ENCODE measurements at regions of chr5 and their contacts with region 1.

Region 1: GRCh38 chr5:143066556-143067281 is 296.5 kb downstream of the ARHGAP26 start:
- DNase-seq: peak in 1 of 4 donors; percentile 45
- ATAC-seq: no peak
- H3K4me3 ChIP-seq: no peak overlapping the region
- H3K27ac ChIP-seq: peak overlapping the region in 1 of 2 donors; percentile 48
- H3K4me1 ChIP-seq: peaks cover 29 to 49% of the 10 kb centered on the region in 2 donors
- H3K27me3 ChIP-seq: no peaks in the 10 kb centered on the region
- CTCF ChIP-seq: no peak

Region 2: GRCh38 chr5:143124593-143124992 is 57.9 kb after region 1 on chr5:
- intact Hi-C with region 1: loop called in 1 of 2 experiments (anchors 10 kb)
- DNase-seq: no peak
- ATAC-seq: no peak
- H3K4me3 ChIP-seq: no peak overlapping the region
- H3K27ac ChIP-seq: peak overlapping the region in 1 of 2 donors; percentile 11
- H3K4me1 ChIP-seq: peaks cover 0 to 37% of the 10 kb centered on the region in 2 donors
- H3K27me3 ChIP-seq: no peaks in the 10 kb centered on the region
- CTCF ChIP-seq: no peak

Region 3: GRCh38 chr5:143413958-143414669 is 347.4 kb after region 1 on chr5:
- intact Hi-C with region 1: loop called in 1 of 2 experiments (anchors 5 kb)
- DNase-seq: no peak
- ATAC-seq: no peak
- H3K4me3 ChIP-seq: no peak overlapping the region
- H3K27ac ChIP-seq: no peak overlapping the region
- H3K4me1 ChIP-seq: peaks cover 0 to 18% of the 10 kb centered on the region in 2 donors
- H3K27me3 ChIP-seq: no peaks in the 10 kb centered on the region
- CTCF ChIP-seq: no peak